B cell (primary cell): ENCODE measurements at regions of chr2 and their contacts with region 1.

Region 1: DNA sequence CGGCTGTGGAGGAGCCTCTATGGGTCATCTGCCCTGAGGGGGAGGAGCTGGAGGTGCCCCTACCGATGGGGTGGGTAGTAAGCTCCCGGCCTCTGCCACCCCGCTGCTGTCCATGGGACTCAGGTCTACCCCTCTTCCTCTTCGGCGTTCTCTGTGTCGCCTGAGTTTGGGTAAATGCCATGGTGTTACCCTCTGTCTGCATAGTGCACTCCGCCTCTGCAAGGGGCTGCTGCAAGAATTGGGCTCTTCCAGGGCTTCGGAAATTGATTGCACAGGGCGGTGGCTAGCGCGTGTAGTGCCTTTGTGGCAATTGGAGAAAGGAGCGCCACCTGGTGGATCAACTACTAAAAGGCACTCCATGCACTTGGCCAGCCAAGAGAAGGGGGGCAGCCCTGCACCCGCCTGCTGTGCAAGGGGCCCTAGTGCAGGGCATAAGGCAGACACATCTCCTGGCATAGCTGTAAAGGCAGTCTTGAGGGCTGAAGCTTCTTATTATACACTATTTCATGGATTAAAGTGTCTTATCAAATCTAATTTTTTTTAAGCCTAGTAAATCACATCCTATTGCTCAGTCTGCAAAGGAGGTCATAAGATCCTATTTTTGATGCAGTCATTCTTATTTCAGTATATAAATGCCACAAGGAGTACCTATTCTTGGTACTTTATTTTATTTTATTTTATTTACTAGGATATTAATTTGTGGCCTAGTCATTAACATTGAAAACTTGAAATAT is 308.9 kb downstream of the PDE11A start:
- DNase-seq: peak; percentile 80
- ATAC-seq: peak; percentile 97
- H3K4me3 ChIP-seq: peak overlapping the region in 1 of 5 experiments; percentile 19
- H3K4me3 Mint-ChIP-seq: peak overlapping the region; percentile 75
- H3K27ac ChIP-seq: no peak overlapping the region
- H3K27ac Mint-ChIP-seq: no peak overlapping the region
- H3K4me1 ChIP-seq: peaks cover 4 to 5% of the 10 kb centered on the region in 2 donors
- H3K4me1 Mint-ChIP-seq: peaks cover 9% of the 10 kb centered on the region
- H3K27me3 ChIP-seq: peaks cover 0 to 6% (median 0%) of the 10 kb centered on the region in 4 experiments
- H3K27me3 Mint-ChIP-seq: peaks cover 23% of the 10 kb centered on the region
- CTCF ChIP-seq: peak; percentile 93

Region 2: DNA sequence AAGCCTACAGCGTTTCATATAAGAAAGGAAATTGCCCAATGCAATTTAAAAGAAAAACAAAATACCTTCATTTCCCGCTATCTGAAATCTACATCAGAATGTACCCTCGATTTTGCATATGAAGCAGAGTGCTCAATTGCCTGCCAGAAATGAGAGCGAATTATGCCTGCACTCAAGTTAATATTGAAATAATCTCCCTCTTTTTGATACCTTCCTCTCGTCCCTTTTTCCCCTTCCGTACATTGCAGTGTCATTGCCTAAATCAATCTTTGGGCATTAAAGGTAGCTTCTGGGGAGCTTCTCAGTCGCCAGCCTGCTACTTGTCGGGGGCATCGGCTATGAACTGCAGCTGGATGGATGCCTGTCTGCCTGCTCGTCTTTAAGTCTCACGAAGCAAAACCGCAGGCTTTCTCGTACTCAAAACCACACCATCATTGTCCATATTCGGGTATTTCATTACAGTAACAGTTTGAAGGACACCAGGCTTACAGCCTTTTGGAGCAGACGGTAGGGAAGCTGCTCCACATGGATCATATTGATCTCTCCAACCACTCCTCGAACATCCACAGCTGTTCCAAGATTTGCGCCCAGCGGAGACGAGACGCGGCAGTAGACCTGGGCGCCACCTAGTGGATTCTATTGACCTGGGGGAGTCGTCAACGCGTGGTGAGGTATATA is 615.1 kb before region 1 on chr2:
- CTCF ChIA-PET with region 1: interaction called, 11 read pairs
- POLR2A ChIA-PET with region 1: no interaction called
- intact Hi-C with region 1: no loop called
- DNase-seq: peak; percentile 85
- ATAC-seq: peak; percentile 92
- H3K4me3 ChIP-seq: peak overlapping the region; percentile 42 to 94 (median 67)
- H3K4me3 Mint-ChIP-seq: peak overlapping the region; percentile 92
- H3K27ac ChIP-seq: no peak overlapping the region
- H3K27ac Mint-ChIP-seq: peak overlapping the region; percentile 2
- H3K4me1 ChIP-seq: peaks cover 9 to 13% of the 10 kb centered on the region in 2 donors
- H3K4me1 Mint-ChIP-seq: peaks cover 11% of the 10 kb centered on the region
- H3K27me3 ChIP-seq: peaks cover 0 to 13% (median 10%) of the 10 kb centered on the region in 4 experiments
- H3K27me3 Mint-ChIP-seq: peaks cover 36% of the 10 kb centered on the region
- CTCF ChIP-seq: peak; percentile 99

Region 3: GRCh38 chr2:177467646-177468045 is 296.1 kb before region 1 on chr2:
- CTCF ChIA-PET with region 1: no interaction called
- POLR2A ChIA-PET with region 1: no interaction called
- intact Hi-C with region 1: no loop called
- DNase-seq: no peak
- ATAC-seq: no peak
- H3K4me3 ChIP-seq: no peak overlapping the region
- H3K4me3 Mint-ChIP-seq: no peak overlapping the region
- H3K27ac ChIP-seq: no peak overlapping the region
- H3K27ac Mint-ChIP-seq: no peak overlapping the region
- H3K4me1 ChIP-seq: no peaks in the 10 kb centered on the region
- H3K4me1 Mint-ChIP-seq: no peaks in the 10 kb centered on the region
- H3K27me3 ChIP-seq: no peaks in the 10 kb centered on the region
- H3K27me3 Mint-ChIP-seq: no peaks in the 10 kb centered on the region
- CTCF ChIP-seq: no peak

Region 4: DNA sequence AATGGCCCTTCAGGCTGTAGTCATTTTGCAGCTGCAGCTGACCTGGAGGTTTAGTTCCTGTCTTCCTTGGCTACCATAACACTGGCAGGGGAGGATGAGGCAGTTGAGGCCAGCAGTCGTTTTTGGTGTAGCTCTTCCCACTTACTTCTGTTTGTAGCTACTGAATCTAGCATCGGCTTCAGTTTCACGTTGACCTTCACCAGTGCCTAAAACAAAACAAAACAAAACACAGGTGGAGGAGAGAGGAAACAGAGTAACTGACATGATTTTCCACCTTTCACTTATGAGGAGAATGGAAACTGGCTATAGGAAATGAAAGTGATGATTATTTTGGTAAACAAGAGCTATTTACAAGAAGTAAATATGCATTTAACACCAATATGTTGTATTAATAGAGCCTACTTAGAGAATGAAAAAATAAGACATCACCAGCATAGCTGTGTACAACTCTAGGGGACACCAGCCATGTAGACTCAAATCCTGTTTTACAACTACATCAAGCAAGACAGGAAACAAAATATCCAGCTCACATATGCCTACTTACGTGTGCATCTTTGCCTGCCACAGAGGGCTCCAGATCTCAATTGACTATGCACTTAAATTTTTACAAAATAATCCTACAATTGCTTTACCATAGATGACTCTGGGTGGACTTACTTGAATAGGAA is 134.2 kb before region 1 on chr2:
- CTCF ChIA-PET with region 1: no interaction called
- POLR2A ChIA-PET with region 1: no interaction called
- intact Hi-C with region 1: loop called (anchors 10 kb)
- DNase-seq: no peak
- ATAC-seq: no peak
- H3K4me3 ChIP-seq: no peak overlapping the region
- H3K4me3 Mint-ChIP-seq: no peak overlapping the region
- H3K27ac ChIP-seq: no peak overlapping the region
- H3K27ac Mint-ChIP-seq: no peak overlapping the region
- H3K4me1 ChIP-seq: no peaks in the 10 kb centered on the region
- H3K4me1 Mint-ChIP-seq: peaks cover 15% of the 10 kb centered on the region
- H3K27me3 ChIP-seq: no peaks in the 10 kb centered on the region
- H3K27me3 Mint-ChIP-seq: peaks cover 13% of the 10 kb centered on the region
- CTCF ChIP-seq: no peak

Region 5: DNA sequence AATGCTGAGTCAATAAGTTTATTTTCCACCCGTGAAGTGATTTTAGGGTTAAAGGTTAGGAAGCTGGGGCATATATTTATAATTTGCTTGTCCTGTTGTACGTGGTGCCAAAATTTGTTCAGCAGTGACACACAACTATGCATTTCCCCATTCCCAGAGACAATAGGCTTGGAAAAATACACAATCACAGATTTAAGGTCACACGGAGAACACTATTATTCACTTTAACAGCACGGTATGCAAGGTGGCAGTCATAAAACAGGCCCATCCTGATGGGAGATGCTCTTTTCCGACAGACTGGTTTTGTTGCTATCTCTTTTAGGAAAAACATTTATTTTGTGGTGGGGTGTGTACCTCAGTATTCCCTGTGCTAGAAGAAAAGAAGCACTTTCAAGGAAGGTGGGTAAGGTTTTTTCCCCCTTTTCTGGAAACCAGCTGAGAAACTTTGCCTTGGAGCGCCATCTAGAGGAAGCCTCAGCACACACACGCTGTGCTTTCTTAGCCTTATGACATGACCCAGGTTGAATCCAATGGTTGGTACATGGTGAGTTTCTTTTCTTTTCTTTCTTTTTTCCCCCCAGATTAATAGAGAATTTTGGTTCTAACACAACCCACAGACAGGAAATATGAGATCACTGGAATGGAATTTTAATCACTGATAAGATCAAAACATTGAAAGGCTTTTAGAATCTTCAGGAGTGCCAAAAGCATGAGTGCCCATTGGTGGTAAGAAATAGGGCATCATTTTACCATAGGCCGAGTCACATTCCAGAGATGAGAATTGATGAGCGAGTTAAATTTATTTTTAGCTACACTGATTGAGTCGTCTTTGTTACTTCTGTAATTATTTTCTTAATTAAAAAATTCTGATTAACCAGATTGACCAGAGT is 39.1 kb before region 1 on chr2:
- CTCF ChIA-PET with region 1: interaction called, 13 read pairs
- POLR2A ChIA-PET with region 1: no interaction called
- intact Hi-C with region 1: no loop called
- DNase-seq: peak; percentile 42
- ATAC-seq: peak; percentile 51
- H3K4me3 ChIP-seq: no peak overlapping the region
- H3K4me3 Mint-ChIP-seq: no peak overlapping the region
- H3K27ac ChIP-seq: no peak overlapping the region
- H3K27ac Mint-ChIP-seq: no peak overlapping the region
- H3K4me1 ChIP-seq: no peaks in the 10 kb centered on the region
- H3K4me1 Mint-ChIP-seq: no peaks in the 10 kb centered on the region
- H3K27me3 ChIP-seq: peaks cover 0 to 3% (median 0%) of the 10 kb centered on the region in 4 experiments
- H3K27me3 Mint-ChIP-seq: peaks cover 38% of the 10 kb centered on the region
- CTCF ChIP-seq: peak; percentile 87